ENCODE measurements at regions of chr11 and their contacts with region 1.

Region 1: DNA sequence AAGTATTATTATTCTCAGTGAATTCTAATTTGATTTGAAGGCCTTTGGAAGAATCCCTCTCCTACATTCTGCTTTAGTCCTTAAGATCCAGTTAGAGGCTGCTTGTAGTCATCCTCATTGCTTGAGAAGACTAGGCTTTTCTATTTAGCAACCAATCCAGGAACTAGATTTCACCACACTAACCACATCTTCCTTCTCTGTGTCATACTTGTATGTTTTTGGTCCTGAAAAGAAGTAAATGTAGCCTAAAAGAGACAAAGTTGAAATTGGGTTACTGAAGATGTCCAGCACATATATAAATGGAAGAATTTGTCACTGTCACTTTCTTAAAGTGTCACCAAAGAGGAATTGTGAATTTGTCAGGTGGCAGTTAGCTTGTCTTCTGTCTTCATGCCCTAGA is 46.6 kb upstream of the MMP7 start:
- DNase-seq: no peak
- ATAC-seq: peak; percentile 38
- H3K4me3 ChIP-seq: no peak overlapping the region
- H3K27ac ChIP-seq: no peak overlapping the region
- H3K4me1 ChIP-seq: peaks cover 12% of the 10 kb centered on the region; the same call in 1 of the 2 replicates
- H3K27me3 ChIP-seq: no peaks in the 10 kb centered on the region
- CTCF ChIP-seq: no peak
- EP300 ChIP-seq: no peak
- POLR2A ChIP-seq: no peak
- RAD21 ChIP-seq: no peak

Region 2: GRCh38 chr11:102553835-102554282 is 23.3 kb before region 1 on chr11:
- CTCF ChIA-PET with region 1: interaction called, 23 read pairs
- POLR2A ChIA-PET with region 1: interaction called, 59 read pairs
- RAD21 ChIA-PET with region 1: interaction called, 102 read pairs
- SMC1A ChIA-PET with region 1: interaction called, 322 read pairs
- in situ Hi-C with region 1: no loop called
- intact Hi-C with region 1: no loop called
- DNase-seq: peak; percentile 78
- ATAC-seq: peak; percentile 85
- H3K4me3 ChIP-seq: no peak overlapping the region
- H3K27ac ChIP-seq: peak overlapping the region; percentile 40; the same call in 1 of the 2 replicates
- H3K4me1 ChIP-seq: peaks cover 40% of the 10 kb centered on the region
- H3K27me3 ChIP-seq: no peaks in the 10 kb centered on the region
- CTCF ChIP-seq: no peak
- EP300 ChIP-seq: peak; percentile 70 to 79; a peak in 3 of 4 replicates
- POLR2A ChIP-seq: no peak
- RAD21 ChIP-seq: peak; percentile 30; the same call in 1 of the 2 replicates

Region 3: DNA sequence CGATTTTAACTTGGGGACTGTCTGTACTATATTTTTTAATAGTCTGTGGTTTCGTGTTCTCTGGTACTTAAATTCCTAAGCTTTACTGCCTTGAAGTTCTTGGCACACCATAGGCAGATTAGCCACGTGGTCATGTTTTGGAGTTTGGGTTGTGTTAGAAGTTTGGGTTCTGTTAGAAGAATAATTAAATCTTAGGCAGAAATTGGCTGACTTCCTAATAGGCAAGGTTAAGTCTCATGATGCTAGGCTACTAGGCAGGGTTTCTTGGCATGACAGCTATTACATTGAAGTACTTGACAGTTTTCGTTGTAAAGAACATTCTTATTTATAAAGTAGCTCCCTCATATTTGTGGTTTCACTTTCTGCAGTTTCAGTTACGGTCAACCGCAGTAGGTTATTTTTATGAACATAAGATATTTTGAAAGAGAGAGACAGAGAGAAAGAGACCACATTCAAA is 16.6 kb before region 1 on chr11:
- CTCF ChIA-PET with region 1: interaction called, 23 read pairs
- POLR2A ChIA-PET with region 1: interaction called, 59 read pairs
- RAD21 ChIA-PET with region 1: interaction called, 102 read pairs
- SMC1A ChIA-PET with region 1: interaction called, 322 read pairs
- in situ Hi-C with region 1: no loop called
- intact Hi-C with region 1: loop called (anchors 2 kb)
- DNase-seq: peak; percentile 84
- ATAC-seq: peak; percentile 85
- H3K4me3 ChIP-seq: no peak overlapping the region; the same call in 1 of the 2 replicates
- H3K27ac ChIP-seq: peak overlapping the region; percentile 86
- H3K4me1 ChIP-seq: peaks cover 56% of the 10 kb centered on the region
- H3K27me3 ChIP-seq: no peaks in the 10 kb centered on the region
- CTCF ChIP-seq: no peak
- EP300 ChIP-seq: peak; percentile 88 to 97
- POLR2A ChIP-seq: no peak
- RAD21 ChIP-seq: peak; percentile 12; the same call in 1 of the 2 replicates

Region 4: GRCh38 chr11:102566112-102566511 is 11.1 kb before region 1 on chr11:
- CTCF ChIA-PET with region 1: interaction called, 19 read pairs
- POLR2A ChIA-PET with region 1: interaction called, 25 read pairs
- RAD21 ChIA-PET with region 1: interaction called, 30 read pairs
- SMC1A ChIA-PET with region 1: interaction called, 322 read pairs
- in situ Hi-C with region 1: no loop called
- intact Hi-C with region 1: loop called (anchors 2 kb)
- DNase-seq: no peak
- ATAC-seq: no peak
- H3K4me3 ChIP-seq: no peak overlapping the region
- H3K27ac ChIP-seq: no peak overlapping the region
- H3K4me1 ChIP-seq: peaks cover 31% of the 10 kb centered on the region
- H3K27me3 ChIP-seq: no peaks in the 10 kb centered on the region
- CTCF ChIP-seq: no peak
- EP300 ChIP-seq: no peak
- POLR2A ChIP-seq: no peak
- RAD21 ChIP-seq: no peak

Region 5: GRCh38 chr11:102592634-102593581 is 15.7 kb after region 1 on chr11:
- CTCF ChIA-PET with region 1: interaction called, 10 read pairs
- POLR2A ChIA-PET with region 1: interaction called, 18 read pairs
- RAD21 ChIA-PET with region 1: interaction called, 15 read pairs
- SMC1A ChIA-PET with region 1: interaction called, 26 read pairs
- in situ Hi-C with region 1: no loop called
- intact Hi-C with region 1: loop called (anchors 1 kb)
- DNase-seq: no peak
- ATAC-seq: peak; percentile 26; the same call in 2 of the 3 replicates
- H3K4me3 ChIP-seq: no peak overlapping the region
- H3K27ac ChIP-seq: no peak overlapping the region
- H3K4me1 ChIP-seq: peaks cover 32% of the 10 kb centered on the region
- H3K27me3 ChIP-seq: no peaks in the 10 kb centered on the region; a peak in 1 of 4 replicates
- CTCF ChIP-seq: peak; percentile 25 to 70 (median 57)
- EP300 ChIP-seq: no peak
- POLR2A ChIP-seq: no peak
- RAD21 ChIP-seq: peak; percentile 28

Region 6: DNA sequence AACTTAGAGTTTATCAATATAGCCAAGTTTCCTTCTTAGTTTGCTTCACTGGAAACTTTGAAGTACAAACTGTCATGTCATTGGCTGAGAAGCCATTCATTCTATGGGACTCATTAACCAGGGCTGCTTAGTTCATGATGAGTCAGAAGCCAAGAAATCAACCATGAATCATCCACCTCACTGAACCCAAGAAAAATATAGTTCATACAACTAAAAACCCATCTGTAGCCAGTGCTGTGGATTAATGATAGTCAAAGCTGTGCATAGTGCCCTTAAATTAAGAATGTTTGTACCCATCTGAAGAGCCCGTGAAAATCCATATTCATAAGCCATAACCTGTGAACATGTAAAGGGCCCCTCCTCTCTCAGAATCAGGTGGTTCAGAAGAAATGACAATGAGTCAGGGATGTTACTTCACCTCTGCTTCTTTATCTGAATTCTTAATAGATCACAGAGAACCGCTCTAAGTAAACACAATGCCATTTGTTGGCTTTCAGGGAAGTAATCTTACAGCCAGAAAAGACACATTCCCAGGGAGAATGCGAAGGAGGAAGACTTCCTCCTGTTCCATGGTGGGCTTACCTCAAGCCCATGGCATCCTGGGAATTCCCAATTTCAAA is 22.6 kb after region 1 on chr11:
- CTCF ChIA-PET with region 1: interaction called, 7 read pairs
- POLR2A ChIA-PET with region 1: interaction called, 16 read pairs
- RAD21 ChIA-PET with region 1: interaction called, 9 read pairs
- SMC1A ChIA-PET with region 1: interaction called, 25 read pairs
- in situ Hi-C with region 1: no loop called
- intact Hi-C with region 1: no loop called
- DNase-seq: no peak
- ATAC-seq: peak; percentile 94
- H3K4me3 ChIP-seq: no peak overlapping the region
- H3K27ac ChIP-seq: 0 out of 2 replicates have a peak overlapping the region, but pooled peaks have one; percentile 16
- H3K4me1 ChIP-seq: peaks cover 3% of the 10 kb centered on the region; the same call in 1 of the 2 replicates
- H3K27me3 ChIP-seq: no peaks in the 10 kb centered on the region
- CTCF ChIP-seq: no peak
- EP300 ChIP-seq: peak; percentile 35 to 50; a peak in 3 of 4 replicates
- POLR2A ChIP-seq: no peak
- RAD21 ChIP-seq: no peak

Region 7: DNA sequence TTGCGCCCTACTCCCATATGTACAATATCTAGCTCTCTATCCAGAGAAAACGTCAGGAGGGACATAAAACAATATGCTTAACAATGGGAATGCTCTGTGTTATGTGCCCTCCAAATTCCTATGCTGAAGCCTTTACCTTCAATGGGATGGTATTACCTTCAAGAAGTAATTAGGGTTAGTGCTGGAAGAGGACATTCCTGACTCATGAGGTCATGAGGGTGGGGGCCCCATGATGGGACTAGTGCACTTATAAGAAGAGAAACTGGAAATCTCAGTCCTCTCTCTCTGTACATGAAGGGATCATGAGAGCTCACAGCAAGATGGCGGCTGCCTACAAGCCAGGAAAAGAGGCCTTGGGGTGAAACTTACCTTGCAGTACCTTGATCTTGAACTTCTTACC is 27.7 kb after region 1 on chr11:
- CTCF ChIA-PET with region 1: interaction called, 7 read pairs
- POLR2A ChIA-PET with region 1: interaction called, 11 read pairs
- RAD21 ChIA-PET with region 1: interaction called, 68 read pairs
- SMC1A ChIA-PET with region 1: interaction called, 10 read pairs
- in situ Hi-C with region 1: no loop called
- intact Hi-C with region 1: loop called (anchors 2 kb)
- DNase-seq: no peak
- ATAC-seq: no peak
- H3K4me3 ChIP-seq: no peak overlapping the region
- H3K27ac ChIP-seq: no peak overlapping the region
- H3K4me1 ChIP-seq: peaks cover 2% of the 10 kb centered on the region; the same call in 1 of the 2 replicates
- H3K27me3 ChIP-seq: no peaks in the 10 kb centered on the region
- CTCF ChIP-seq: no peak
- EP300 ChIP-seq: no peak
- POLR2A ChIP-seq: no peak
- RAD21 ChIP-seq: no peak